ENCODE measurements at regions of chr10 and their contacts with region 1.

Region 1: GRCh38 chr10:93376372-93377293 is 105.5 kb downstream of the MYOF start:
- DNase-seq: peak; percentile 90
- H3K4me3 ChIP-seq: no peak overlapping the region
- H3K27ac ChIP-seq: peak overlapping the region; percentile 57
- H3K4me1 ChIP-seq: peaks cover 46% of the 10 kb centered on the region
- H3K27me3 ChIP-seq: no peaks in the 10 kb centered on the region
- CTCF ChIP-seq: peak; percentile 77 to 78
- POLR2A ChIP-seq: no peak

Region 2: DNA sequence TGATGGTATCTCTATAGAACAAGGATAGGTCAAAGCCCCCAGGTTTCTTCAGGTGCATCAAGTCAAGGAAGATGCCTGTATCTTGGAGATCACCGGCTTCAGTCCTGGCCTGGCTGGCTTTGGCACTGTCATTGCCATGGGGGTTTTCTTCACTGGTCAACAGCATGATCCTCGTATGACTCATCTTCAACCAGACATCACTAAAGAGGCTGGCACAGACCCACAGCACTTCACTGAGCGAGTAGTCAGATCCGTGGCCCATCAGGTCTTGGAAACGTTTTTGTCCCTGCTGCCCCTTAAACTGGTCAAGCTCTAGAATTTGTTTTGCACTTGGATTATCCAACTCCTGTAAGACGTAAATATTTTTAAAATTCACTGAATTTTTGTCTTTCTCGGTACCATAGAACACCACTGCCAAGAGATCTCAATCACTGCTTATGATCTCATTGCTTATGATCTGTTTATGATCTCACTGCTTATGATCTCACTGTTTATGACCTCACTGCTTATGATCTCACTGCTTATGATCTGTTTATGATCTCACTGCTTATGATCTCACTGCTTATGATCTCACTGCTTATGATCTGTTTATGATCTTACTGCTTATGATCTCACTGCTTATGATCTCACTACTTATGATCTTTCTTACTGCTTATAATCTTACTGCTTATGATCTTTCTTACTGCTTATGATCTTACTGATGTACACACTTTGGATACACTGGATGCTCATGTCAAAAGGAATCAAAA is 167.7 kb before region 1 on chr10:
- CTCF ChIA-PET with region 1: no interaction called
- POLR2A ChIA-PET with region 1: no interaction called
- dilution Hi-C with region 1: no loop called
- intact Hi-C with region 1: no loop called
- DNase-seq: no peak
- H3K4me3 ChIP-seq: no peak overlapping the region
- H3K27ac ChIP-seq: no peak overlapping the region
- H3K4me1 ChIP-seq: no peaks in the 10 kb centered on the region
- H3K27me3 ChIP-seq: peaks cover 0 to 1% of the 10 kb centered on the region in 2 experiments
- CTCF ChIP-seq: no peak
- POLR2A ChIP-seq: no peak

Region 3: DNA sequence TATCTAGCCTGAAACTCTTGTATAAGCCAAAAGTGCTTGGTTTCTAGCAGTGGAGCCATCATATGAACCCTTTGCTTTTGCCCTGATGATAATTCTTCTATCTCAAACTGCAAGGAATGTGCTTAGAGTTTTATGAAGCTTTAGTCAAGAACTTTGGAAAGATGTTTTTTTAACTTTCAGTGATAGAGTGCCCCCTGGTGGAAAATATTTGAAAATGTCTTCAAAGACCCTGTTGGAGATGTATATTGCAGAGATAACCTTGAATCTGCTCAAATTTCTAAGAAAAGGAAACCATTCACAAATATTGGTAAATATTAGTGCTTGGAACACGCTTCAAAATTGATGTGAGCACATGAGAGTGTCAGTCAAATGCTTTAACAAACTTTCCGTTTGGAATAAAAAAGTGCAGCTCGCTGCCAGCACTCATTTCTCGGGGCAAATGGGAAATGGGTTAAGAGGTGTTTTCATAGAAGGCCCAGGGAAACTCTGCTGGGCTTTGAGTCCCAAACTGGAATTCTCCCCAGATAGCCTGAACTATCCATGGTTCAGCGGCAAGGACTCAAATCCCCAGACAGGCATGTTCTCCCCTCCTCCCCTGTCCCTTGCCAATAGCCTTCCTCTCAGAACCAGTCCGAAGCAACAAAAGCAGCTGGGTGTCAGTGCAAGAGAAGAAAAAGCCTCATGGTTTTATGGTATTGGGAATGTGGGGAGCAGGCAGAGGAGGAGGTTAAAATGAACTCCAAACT is 23.8 kb before region 1 on chr10:
- CTCF ChIA-PET with region 1: interaction called, 15 read pairs
- POLR2A ChIA-PET with region 1: no interaction called
- dilution Hi-C with region 1: no loop called
- intact Hi-C with region 1: no loop called
- DNase-seq: peak; percentile 46
- H3K4me3 ChIP-seq: no peak overlapping the region
- H3K27ac ChIP-seq: no peak overlapping the region
- H3K4me1 ChIP-seq: peaks cover 2% of the 10 kb centered on the region
- H3K27me3 ChIP-seq: no peaks in the 10 kb centered on the region
- CTCF ChIP-seq: peak; percentile 36 to 46
- POLR2A ChIP-seq: no peak

Region 4: DNA sequence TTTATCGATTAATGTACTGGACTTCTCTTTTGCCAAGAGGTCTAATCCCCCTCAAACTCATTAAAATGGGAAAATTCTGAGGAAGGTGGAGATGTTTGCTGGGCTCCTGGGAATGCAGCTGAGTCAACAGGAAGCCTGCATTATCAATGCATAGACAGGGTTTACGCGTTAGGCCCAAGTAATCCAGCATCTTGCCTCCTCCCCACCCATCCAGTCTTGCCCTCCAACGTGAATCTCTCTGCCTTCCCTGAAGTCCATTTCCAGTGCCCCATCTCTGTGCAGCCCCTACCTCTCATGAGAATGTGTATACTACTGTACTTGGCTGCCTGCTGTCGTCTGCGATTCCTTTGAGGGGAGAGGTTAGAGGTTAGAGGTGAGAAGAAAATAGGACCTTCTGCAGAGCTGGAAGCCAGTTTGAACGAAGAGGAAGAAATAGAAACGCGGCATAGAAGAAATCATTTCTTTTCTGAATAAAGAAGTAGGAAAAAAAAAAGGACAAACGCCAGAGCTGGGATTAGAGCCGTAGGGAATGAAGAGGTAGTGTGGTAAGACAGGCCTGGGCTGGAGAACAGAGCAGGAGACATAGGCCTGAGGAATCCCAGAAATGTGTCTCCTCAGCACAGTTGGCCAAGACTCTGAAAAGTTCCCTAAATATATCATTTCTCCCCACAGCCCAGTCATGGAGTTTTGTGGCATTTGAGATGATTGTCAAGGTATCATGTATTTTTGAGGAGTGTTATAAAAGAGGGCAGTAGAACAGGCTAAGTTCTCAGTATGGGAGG is 29.9 kb after region 1 on chr10:
- CTCF ChIA-PET with region 1: interaction called, 14 read pairs
- POLR2A ChIA-PET with region 1: no interaction called
- dilution Hi-C with region 1: no loop called
- intact Hi-C with region 1: no loop called
- DNase-seq: peak; percentile 51
- H3K4me3 ChIP-seq: no peak overlapping the region
- H3K27ac ChIP-seq: peak overlapping the region; percentile 0
- H3K4me1 ChIP-seq: peaks cover 30% of the 10 kb centered on the region
- H3K27me3 ChIP-seq: no peaks in the 10 kb centered on the region
- CTCF ChIP-seq: no peak
- POLR2A ChIP-seq: no peak

Region 5: GRCh38 chr10:93437088-93437945 is 60.7 kb after region 1 on chr10:
- CTCF ChIA-PET with region 1: interaction called, 17 read pairs
- POLR2A ChIA-PET with region 1: no interaction called
- dilution Hi-C with region 1: no loop called
- intact Hi-C with region 1: loop called (anchors 1 kb)
- DNase-seq: peak; percentile 99
- H3K4me3 ChIP-seq: no peak overlapping the region
- H3K27ac ChIP-seq: peak overlapping the region; percentile 100
- H3K4me1 ChIP-seq: peaks cover 52% of the 10 kb centered on the region
- H3K27me3 ChIP-seq: no peaks in the 10 kb centered on the region
- CTCF ChIP-seq: no peak
- POLR2A ChIP-seq: peak; percentile 50

Region 6: DNA sequence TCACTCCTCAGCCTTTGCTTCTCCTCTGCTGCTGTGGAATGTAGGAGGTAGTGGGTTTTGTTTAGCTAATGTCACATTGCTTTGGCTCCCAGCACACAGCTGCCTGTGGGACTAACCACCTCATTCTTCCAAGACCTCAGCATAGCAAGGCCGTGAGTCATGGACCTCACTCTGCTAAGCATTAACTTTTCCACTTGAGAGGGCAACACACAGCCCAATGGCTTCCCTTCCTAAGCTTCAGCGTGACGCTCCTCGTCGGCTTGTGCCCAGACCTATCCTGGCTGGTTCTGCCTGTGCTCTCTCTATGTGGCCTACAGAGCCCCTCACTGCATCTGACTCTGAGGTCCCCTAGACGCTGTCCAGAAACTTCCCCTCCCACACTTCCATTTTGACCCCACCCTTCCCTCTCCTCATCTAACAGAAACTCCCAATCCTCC is 82.2 kb after region 1 on chr10:
- CTCF ChIA-PET with region 1: interaction called, 32 read pairs
- POLR2A ChIA-PET with region 1: interaction called, 4 read pairs
- dilution Hi-C with region 1: no loop called
- intact Hi-C with region 1: loop called (anchors 1 kb)
- DNase-seq: peak; percentile 98
- H3K4me3 ChIP-seq: no peak overlapping the region
- H3K27ac ChIP-seq: peak overlapping the region; percentile 85
- H3K4me1 ChIP-seq: peaks cover 57% of the 10 kb centered on the region
- H3K27me3 ChIP-seq: no peaks in the 10 kb centered on the region
- CTCF ChIP-seq: no peak
- POLR2A ChIP-seq: peak; percentile 48

Region 7: GRCh38 chr10:93471110-93471651 is 94.5 kb after region 1 on chr10:
- CTCF ChIA-PET with region 1: interaction called, 10 read pairs
- POLR2A ChIA-PET with region 1: interaction called, 5 read pairs
- dilution Hi-C with region 1: no loop called
- intact Hi-C with region 1: no loop called
- DNase-seq: peak; percentile 97
- H3K4me3 ChIP-seq: no peak overlapping the region
- H3K27ac ChIP-seq: peak overlapping the region; percentile 86
- H3K4me1 ChIP-seq: peaks cover 87% of the 10 kb centered on the region
- H3K27me3 ChIP-seq: no peaks in the 10 kb centered on the region
- CTCF ChIP-seq: no peak
- POLR2A ChIP-seq: no peak

Region 8: GRCh38 chr10:93503075-93503474 is 126.4 kb after region 1 on chr10:
- CTCF ChIA-PET with region 1: interaction called, 88 read pairs
- POLR2A ChIA-PET with region 1: no interaction called
- dilution Hi-C with region 1: no loop called
- intact Hi-C with region 1: no loop called
- DNase-seq: no peak
- H3K4me3 ChIP-seq: no peak overlapping the region
- H3K27ac ChIP-seq: no peak overlapping the region
- H3K4me1 ChIP-seq: peaks cover 9% of the 10 kb centered on the region
- H3K27me3 ChIP-seq: no peaks in the 10 kb centered on the region
- CTCF ChIP-seq: no peak
- POLR2A ChIP-seq: no peak